ENCODE measurements at regions of chr10 and their contacts with region 1.

Region 1: DNA sequence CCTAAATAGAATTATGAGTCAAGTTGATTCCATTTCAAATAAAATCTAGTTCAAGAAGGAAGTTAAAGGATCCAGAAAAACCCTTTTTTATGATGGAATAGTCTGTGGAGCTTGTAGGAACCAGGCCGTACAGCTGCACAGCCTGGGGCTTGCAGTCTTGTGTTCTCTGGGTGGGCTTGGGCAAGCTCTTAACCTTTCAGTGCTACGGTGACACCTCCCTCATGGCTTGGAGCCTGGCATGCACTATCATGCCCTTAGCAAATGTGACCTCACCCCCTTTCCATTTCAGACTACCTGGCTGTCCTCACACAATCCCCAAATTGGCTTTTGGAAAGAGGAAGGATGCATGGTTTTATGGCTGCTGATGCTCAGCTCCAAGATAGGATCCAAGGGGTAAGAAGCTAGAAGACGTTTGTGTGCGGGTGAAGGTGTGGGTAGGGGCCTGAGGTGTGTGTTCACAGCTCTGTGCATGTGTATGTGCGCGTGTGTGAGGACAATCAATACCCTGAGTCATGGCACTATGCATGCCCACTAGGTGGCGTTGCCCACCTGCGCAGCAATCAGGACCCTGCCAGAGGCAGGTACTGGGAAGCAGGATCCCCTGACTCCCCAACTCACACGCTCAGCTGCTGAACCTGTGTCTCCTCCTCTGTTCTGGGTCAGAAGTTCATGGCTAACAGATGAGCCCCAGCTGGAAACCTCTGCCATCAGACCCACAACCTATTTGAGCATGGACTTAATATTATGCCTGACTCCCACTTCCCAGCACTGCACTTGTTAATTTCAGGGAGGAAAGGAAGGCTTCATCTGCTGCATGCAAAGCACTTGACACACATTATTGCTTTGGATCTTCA is 113.4 kb downstream of the PTPN20 start:
- DNase-seq: peak; percentile 49 to 87 (median 76)
- ATAC-seq: peak; percentile 89 to 96 (median 92)
- H3K4me3 ChIP-seq: no peak overlapping the region
- H3K27ac ChIP-seq: no peak overlapping the region
- H3K4me1 ChIP-seq: no peaks in the 10 kb centered on the region
- H3K27me3 ChIP-seq: no peaks in the 10 kb centered on the region
- CTCF ChIP-seq: peak; percentile 52 to 80 (median 71)

Region 2: GRCh38 chr10:47104786-47105385 is 80.3 kb after region 1 on chr10:
- intact Hi-C with region 1: no loop called
- DNase-seq: peak in 1 of 6 donors; percentile 36
- ATAC-seq: peak in 2 of 4 donors; percentile 54 to 68
- H3K4me3 ChIP-seq: no peak overlapping the region
- H3K27ac ChIP-seq: no peak overlapping the region
- H3K4me1 ChIP-seq: no peaks in the 10 kb centered on the region
- H3K27me3 ChIP-seq: no peaks in the 10 kb centered on the region
- CTCF ChIP-seq: no peak

Region 3: DNA sequence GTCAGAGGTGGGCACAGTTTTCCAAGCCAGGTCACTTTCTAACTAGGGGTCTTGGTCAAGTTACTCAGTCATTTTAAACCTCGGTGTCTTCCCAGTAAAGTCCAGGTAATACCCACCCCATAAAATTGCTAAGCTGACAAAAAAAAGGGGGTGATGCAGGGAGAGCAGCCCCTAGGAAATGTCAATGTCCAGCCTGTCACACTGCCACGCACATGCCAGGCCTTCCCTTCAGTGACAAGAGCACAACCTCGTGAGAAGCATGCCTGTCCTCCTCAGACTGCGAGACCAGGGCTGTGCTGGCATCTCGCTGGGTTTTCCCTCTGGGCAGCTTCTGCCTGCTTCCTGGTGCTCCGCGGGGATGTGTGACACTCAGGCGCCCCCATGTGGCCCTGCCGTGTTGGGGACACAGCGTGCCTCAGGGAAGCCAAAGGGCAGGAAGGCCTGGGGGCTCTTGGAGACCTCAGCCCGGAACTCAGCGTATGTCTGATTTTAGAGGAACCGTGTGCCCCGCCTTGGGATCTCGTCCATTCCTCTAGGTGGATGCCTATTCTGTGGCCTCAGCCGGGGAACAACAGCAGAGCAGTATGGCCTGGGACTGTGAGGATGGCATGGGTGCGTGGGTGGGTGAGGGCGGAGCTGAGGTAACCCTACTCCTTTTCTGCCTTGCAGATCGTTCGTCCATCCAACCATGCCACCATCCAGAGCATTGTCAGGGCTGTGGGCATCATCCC is 287.5 kb after region 1 on chr10:
- intact Hi-C with region 1: loop called in 1 of 3 experiments (anchors 10 kb)
- DNase-seq: peak; percentile 84 to 95 (median 89)
- ATAC-seq: peak; percentile 86 to 96 (median 90)
- H3K4me3 ChIP-seq: no peak overlapping the region
- H3K27ac ChIP-seq: peak overlapping the region in 2 of 4 donors; percentile 29 to 37
- H3K4me1 ChIP-seq: peaks cover 13 to 24% (median 22%) of the 10 kb centered on the region in 3 donors
- H3K27me3 ChIP-seq: no peaks in the 10 kb centered on the region
- CTCF ChIP-seq: peak; percentile 65 to 78 (median 72)

Region 4: GRCh38 chr10:47339759-47340607 is 315.4 kb after region 1 on chr10:
- intact Hi-C with region 1: loop called in 1 of 3 experiments (anchors 5 kb)
- DNase-seq: peak in 1 of 6 donors; percentile 49
- ATAC-seq: peak in 1 of 4 donors; percentile 29
- H3K4me3 ChIP-seq: no peak overlapping the region
- H3K27ac ChIP-seq: no peak overlapping the region
- H3K4me1 ChIP-seq: no peaks in the 10 kb centered on the region
- H3K27me3 ChIP-seq: no peaks in the 10 kb centered on the region
- CTCF ChIP-seq: no peak

Measured in pancreas (tissue), 10 donors.